KBM-7 (cell line): ENCODE measurements at regions of chr13 and their contacts with region 1.

Region 1: DNA sequence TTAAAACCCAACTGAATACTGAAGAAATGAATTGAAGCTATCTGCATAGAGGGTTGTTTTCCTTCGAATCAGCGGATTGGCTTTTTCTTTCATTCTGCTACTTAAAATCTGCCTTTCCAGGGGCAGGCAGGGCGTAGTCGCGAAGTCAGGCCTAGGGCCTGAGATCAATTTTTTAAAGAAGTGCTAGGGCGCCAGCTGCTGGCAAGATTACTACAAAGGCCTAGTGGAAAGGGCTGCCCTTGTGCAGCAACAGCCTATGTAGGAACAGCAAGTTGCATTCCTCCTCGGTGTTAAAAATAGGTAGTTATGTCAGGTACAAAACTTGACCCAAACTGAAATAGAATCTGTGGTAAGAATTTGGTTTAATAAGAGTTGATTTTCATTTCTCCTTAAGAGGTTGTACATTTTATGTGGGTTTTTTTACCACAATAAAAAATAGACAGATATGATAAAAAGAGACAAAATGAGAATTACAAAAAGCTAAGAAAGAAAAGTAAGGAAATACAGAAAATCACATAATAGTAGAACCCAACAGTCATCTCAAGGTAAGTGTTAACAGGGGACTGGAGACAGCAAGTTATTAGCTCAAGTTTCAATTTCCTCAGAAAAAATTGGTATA is 9.5 kb upstream of the URAD start:
- DNase-seq: peak; percentile 79

Region 2: DNA sequence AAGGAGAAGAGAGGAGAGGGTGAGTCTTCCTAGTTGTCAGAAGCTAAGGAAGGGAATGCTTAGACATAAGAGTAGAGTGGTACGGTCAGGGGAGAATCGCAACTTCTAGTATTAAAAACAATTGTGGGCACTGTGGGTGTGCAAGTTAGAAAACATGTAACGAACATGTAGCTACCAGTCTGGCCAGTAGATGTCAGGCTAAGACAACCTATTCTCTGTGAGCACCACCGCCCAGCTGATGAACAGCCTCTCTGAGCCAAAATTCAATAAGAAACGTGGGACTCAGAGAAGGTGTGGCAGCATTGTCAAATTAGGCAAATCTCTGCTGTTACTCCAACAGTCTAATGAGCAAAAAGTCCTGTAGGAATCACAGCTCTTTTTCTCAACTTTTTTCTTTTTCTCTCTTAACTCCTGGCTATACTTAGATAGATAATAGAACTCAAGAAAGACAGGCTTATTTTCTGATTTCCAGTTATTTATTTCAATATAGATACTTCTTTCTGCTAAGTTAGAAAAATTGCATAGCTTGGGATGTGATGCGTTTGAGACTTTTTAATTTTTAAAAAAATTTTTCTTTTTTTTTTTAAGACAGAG is 1012.6 kb before region 1 on chr13:
- in situ Hi-C with region 1: loop called (anchors 25 kb)
- DNase-seq: peak; percentile 90

Region 3: GRCh38 chr13:27481766-27482165 is 516.2 kb before region 1 on chr13:
- in situ Hi-C with region 1: no loop called
- DNase-seq: peak; percentile 41

Region 4: DNA sequence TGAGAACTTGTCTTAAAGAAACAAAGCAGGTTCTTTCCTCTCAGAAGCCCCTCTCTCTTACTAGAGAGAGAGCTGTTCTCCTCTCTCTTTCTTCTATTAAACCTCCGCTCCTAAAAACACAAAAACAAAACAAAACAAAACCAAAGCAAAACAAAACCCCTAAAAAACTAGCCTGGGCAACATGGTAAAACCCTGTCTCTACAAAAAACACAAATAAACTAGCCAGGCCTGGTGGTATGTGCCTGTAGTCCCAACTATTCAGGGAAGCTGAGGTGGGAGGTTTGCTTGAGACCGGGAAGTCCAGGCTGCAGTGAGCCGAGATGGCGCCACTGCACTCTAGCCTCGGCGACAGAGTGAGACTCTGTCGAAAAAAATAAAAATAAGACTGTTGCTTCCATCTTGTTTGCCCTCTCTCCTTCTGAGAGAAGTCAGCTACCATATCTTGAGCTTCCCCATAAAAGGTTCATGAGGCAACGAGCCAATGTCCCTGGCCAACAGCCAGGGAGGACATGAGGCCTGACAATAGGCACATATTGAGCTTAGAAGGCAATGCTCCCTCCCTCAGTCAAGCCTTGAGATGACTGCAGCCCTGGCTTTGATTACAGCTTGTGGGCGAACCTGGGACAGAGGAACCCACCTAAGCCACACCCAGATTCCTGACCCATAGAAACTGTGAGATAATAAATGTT is 119.8 kb after region 1 on chr13:
- in situ Hi-C with region 1: no loop called
- DNase-seq: no peak

Region 5: GRCh38 chr13:28423010-28423409 is 425.0 kb after region 1 on chr13:
- in situ Hi-C with region 1: no loop called
- DNase-seq: peak; percentile 87